ENCODE measurements at regions of chr17 and their contacts with region 1.

Region 1: GRCh38 chr17:57463103-57463851 is 207.0 kb downstream of the MSI2 start:
- DNase-seq: peak; percentile 52
- ATAC-seq: peak; percentile 94
- H3K4me3 Mint-ChIP-seq: peak overlapping the region; percentile 65
- H3K27ac Mint-ChIP-seq: peak overlapping the region; percentile 79
- H3K4me1 Mint-ChIP-seq: peaks cover 89% of the 10 kb centered on the region
- H3K27me3 Mint-ChIP-seq: no peaks in the 10 kb centered on the region
- CTCF ChIP-seq: no peak

Region 2: DNA sequence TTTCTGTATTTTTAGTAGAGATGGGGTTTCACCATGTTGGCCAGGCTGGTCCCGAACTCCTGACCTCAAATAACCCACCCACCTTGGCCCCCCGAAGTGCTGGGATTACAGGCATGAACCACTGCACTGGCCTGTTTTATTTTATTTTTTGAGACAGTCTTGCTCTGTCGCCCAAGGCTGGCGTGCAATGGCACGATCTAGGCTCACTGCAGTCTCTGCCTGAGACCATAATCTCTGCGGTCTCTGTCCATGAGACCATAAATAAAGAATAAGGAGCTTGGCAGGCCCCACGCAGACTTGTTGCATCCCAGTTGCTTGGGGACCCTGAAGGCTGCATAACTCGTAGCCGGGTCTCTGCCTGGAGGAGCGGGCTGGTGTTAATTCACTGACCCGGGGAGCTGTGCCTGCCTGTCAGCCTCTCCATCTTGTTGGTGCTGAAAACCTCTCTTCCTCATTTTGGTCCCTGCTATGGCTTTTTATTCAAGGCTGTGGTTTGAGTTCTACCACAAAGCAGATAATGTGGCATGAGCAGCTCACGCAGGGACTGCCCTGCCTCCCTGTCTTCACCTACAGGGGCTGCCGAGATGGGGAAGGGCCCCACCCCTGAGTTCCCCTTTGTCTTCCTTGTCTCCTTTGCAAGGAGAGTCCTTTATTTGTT is 124.9 kb before region 1 on chr17:
- CTCF ChIA-PET with region 1: no interaction called
- POLR2A ChIA-PET with region 1: no interaction called
- intact Hi-C with region 1: loop called (anchors 5 kb)
- DNase-seq: peak; percentile 28
- ATAC-seq: peak; percentile 95
- H3K4me3 Mint-ChIP-seq: peak overlapping the region; percentile 58
- H3K27ac Mint-ChIP-seq: peak overlapping the region; percentile 36
- H3K4me1 Mint-ChIP-seq: peaks cover 26% of the 10 kb centered on the region
- H3K27me3 Mint-ChIP-seq: no peaks in the 10 kb centered on the region
- CTCF ChIP-seq: no peak

Region 3: DNA sequence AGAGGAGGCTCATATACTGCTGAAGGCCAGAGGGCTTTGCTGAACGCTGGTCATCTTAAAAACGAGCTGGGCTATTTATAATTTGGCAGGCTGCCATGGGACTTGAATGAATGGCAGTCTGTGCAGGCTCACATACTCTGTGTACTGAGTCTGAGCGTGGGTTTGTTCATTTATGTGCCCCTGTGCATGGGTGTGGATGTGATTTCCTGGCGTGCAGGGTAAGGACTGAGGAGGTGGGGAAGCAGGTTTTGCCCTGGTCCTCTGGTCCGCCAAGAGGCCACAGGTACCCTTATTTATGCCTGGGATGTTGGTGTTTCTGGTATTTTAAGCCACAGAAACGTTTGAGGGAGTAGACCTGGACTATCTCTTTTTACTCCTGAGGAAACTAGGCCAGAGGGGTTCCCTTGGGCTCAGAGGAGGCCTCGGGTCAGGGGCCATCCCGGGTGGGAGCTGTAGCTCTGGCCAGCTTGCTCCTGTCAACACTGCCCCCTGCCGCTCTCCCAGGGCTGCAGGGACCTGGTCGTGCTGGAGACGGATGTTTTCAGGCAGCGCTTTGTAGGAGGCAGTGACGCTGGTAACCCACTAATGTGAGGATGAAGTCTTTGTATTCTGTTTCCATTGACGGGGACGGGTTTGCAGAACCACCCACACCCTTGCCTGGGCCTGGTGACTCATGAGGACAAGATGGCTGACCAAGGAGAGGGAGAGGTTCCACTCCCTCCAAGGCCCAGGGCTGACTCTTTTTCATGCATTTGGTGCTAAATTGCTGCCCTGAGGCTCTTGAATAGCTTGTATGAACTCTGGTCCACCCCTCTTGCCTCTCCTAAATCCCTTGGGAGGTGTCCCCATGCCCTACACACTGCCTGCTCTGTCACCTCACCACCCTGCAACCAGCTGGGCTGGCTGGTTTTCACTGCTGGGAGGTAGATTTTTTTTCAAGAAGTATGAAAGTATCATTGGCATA is 22.5 kb before region 1 on chr17:
- CTCF ChIA-PET with region 1: no interaction called
- POLR2A ChIA-PET with region 1: interaction called, 32 read pairs
- intact Hi-C with region 1: loop called (anchors 1 kb)
- DNase-seq: no peak
- ATAC-seq: peak; percentile 74
- H3K4me3 Mint-ChIP-seq: peak overlapping the region; percentile 32
- H3K27ac Mint-ChIP-seq: peak overlapping the region; percentile 81
- H3K4me1 Mint-ChIP-seq: peaks cover 91% of the 10 kb centered on the region
- H3K27me3 Mint-ChIP-seq: no peaks in the 10 kb centered on the region
- CTCF ChIP-seq: no peak

Region 4: GRCh38 chr17:57604771-57605674 is 141.7 kb after region 1 on chr17:
- CTCF ChIA-PET with region 1: no interaction called
- POLR2A ChIA-PET with region 1: interaction called, 3 read pairs
- intact Hi-C with region 1: loop called (anchors 1 kb)
- DNase-seq: peak; percentile 48
- ATAC-seq: peak; percentile 76
- H3K4me3 Mint-ChIP-seq: peak overlapping the region; percentile 72
- H3K27ac Mint-ChIP-seq: peak overlapping the region; percentile 86
- H3K4me1 Mint-ChIP-seq: peaks cover 56% of the 10 kb centered on the region
- H3K27me3 Mint-ChIP-seq: no peaks in the 10 kb centered on the region
- CTCF ChIP-seq: no peak

Region 5: GRCh38 chr17:57739402-57740392 is 276.4 kb after region 1 on chr17:
- CTCF ChIA-PET with region 1: no interaction called
- POLR2A ChIA-PET with region 1: no interaction called
- intact Hi-C with region 1: loop called (anchors 5 kb)
- DNase-seq: no peak
- ATAC-seq: peak; percentile 58
- H3K4me3 Mint-ChIP-seq: no peak overlapping the region
- H3K27ac Mint-ChIP-seq: no peak overlapping the region
- H3K4me1 Mint-ChIP-seq: peaks cover 25% of the 10 kb centered on the region
- H3K27me3 Mint-ChIP-seq: no peaks in the 10 kb centered on the region
- CTCF ChIP-seq: no peak